Naive thymus-derived CD4-positive, alpha-beta T cell (primary cell): ENCODE measurements at regions of chr11 and their contacts with region 1.

Region 1: GRCh38 chr11:6737872-6738466 is 33.8 kb downstream of the OR2AG2 start:
- DNase-seq: peak in 8 of 9 donors; percentile 46 to 79 (median 72)
- ATAC-seq: peak; percentile 86
- H3K4me3 ChIP-seq: no peak overlapping the region
- H3K4me3 Mint-ChIP-seq: peak overlapping the region in 9 of 10 donors; percentile 4 to 90 (median 46)
- H3K27ac ChIP-seq: peak overlapping the region; percentile 61
- H3K27ac Mint-ChIP-seq: peak overlapping the region in 8 of 9 donors; percentile 34 to 92 (median 83)
- H3K4me1 ChIP-seq: peaks cover 70 to 73% of the 10 kb centered on the region in 2 donors
- H3K4me1 Mint-ChIP-seq: peaks cover 65 to 96% (median 86%) of the 10 kb centered on the region in 7 donors
- H3K27me3 ChIP-seq: no peaks in the 10 kb centered on the region
- H3K27me3 Mint-ChIP-seq: no peaks in the 10 kb centered on the region

Region 2: DNA sequence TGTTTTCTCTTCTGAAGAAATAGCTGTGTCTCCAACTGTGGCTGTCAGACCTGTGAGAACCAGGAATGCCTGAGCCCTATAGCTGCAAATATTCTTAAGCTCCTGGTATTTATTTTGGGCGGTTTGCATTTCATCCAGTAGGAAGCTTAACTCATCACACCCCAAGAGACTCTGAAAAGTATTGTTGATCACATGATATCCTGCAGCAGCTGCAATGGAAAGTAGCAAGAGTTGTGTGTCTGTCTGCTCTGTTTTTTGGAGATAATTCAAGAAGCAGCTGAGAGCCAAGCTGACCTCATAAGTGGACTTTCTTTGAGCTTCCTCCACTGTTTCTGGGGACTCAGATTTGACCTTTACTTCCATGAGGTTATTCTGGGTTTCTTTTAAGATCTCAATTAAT is 18.4 kb before region 1 on chr11:
- CTCF ChIA-PET with region 1: interaction called, 26 read pairs
- POLR2A ChIA-PET with region 1: interaction called, 14 read pairs
- intact Hi-C with region 1: no loop called
- DNase-seq: no peak
- ATAC-seq: no peak
- H3K4me3 ChIP-seq: no peak overlapping the region
- H3K4me3 Mint-ChIP-seq: peak overlapping the region in 3 of 10 donors; percentile 12 to 70 (median 12)
- H3K27ac ChIP-seq: peak overlapping the region; percentile 4
- H3K27ac Mint-ChIP-seq: peak overlapping the region in 8 of 9 donors; percentile 16 to 91 (median 64)
- H3K4me1 ChIP-seq: peaks cover 27 to 46% of the 10 kb centered on the region in 2 donors
- H3K4me1 Mint-ChIP-seq: peaks cover 22 to 82% (median 72%) of the 10 kb centered on the region in 7 donors
- H3K27me3 ChIP-seq: no peaks in the 10 kb centered on the region
- H3K27me3 Mint-ChIP-seq: no peaks in the 10 kb centered on the region

Region 3: DNA sequence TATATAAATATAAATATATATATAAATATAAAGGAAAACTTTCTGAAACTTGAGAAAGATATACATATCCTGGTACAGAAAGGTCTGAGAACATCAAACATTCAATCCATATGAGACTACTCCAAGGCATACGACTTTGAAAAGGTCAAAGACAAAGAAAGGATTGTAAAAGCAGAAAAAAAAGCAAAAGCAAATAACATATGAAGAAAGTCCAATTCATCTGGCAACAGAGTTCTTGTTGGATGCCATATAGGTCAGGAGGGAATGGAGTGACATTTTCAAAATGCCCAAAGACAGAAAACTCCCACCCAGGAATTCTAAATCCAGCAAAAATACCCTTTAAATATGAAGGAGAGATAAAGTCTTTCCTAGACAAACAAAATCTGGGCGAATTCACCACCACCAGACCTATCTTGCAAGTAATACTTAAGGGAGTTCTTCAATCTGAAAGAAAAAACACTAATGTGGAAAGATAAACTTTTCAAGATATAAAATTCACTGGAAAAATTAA is 12.5 kb before region 1 on chr11:
- CTCF ChIA-PET with region 1: interaction called, 26 read pairs
- POLR2A ChIA-PET with region 1: interaction called, 14 read pairs
- intact Hi-C with region 1: loop called in 1 of 2 experiments (anchors 1 kb)
- DNase-seq: no peak
- ATAC-seq: no peak
- H3K4me3 ChIP-seq: no peak overlapping the region
- H3K4me3 Mint-ChIP-seq: peak overlapping the region in 4 of 10 donors; percentile 35 to 71 (median 59)
- H3K27ac ChIP-seq: no peak overlapping the region
- H3K27ac Mint-ChIP-seq: peak overlapping the region in 4 of 9 donors; percentile 76 to 91 (median 77)
- H3K4me1 ChIP-seq: peaks cover 48 to 70% of the 10 kb centered on the region in 2 donors
- H3K4me1 Mint-ChIP-seq: peaks cover 49 to 98% (median 84%) of the 10 kb centered on the region in 7 donors
- H3K27me3 ChIP-seq: no peaks in the 10 kb centered on the region
- H3K27me3 Mint-ChIP-seq: no peaks in the 10 kb centered on the region